B cell (primary cell): ENCODE measurements at regions of chr5 and their contacts with region 1.

Region 1: DNA sequence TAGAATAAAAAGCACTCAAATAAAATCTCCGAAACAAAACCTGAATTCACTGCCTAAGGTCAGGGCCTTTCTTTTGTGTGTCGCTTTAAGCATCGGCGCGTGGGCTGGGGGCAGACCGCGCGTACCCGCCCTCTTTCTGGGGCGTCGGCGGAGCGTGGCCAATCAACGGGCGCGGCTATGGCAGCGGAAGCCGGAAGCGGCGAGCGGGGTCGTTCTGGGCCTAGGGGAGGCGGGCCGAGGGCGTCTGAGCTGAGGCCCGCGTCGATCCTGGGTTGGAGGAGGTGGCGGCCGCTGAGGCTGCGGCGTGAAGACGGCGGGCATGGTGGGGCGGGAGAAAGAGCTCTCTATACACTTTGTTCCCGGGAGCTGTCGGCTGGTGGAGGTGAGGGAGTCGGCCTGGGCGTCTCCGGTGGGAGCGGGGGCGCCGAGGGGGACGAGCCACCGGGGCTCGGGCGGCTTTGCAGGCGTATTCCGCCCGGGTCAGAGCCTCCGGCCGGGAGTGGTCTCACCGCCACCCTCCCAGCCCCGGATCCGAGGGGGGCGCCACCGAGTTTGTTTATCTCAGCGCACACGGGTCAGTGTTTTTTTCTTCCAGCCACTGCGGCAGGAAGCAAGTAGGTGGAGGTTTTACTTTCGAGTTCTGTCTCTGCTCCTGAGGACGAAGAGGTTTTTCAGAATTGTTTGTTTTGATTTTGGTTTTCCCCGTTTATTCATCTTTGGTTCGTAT is at the start of gene MAT2B:
- DNase-seq: peak; percentile 97
- ATAC-seq: peak; percentile 88
- H3K4me3 ChIP-seq: peak within 1 kb of the TSS; percentile 61 to 99 (median 83)
- H3K4me3 Mint-ChIP-seq: peak within 1 kb of the TSS; percentile 98
- H3K27ac ChIP-seq: peak within 1 kb of the TSS; percentile 93 to 95
- H3K27ac Mint-ChIP-seq: peak within 1 kb of the TSS; percentile 98
- H3K4me1 ChIP-seq: peaks cover 47 to 60% of the 10 kb centered on the region in 2 donors
- H3K4me1 Mint-ChIP-seq: peaks cover 61% of the 10 kb centered on the region
- H3K27me3 ChIP-seq: no peaks in the 10 kb centered on the region
- H3K27me3 Mint-ChIP-seq: no peaks in the 10 kb centered on the region
- CTCF ChIP-seq: peak; percentile 76
- total RNA-seq, gene MAT2B: 117 and 123 TPM in 2 replicates

Region 2: GRCh38 chr5:163094492-163095180 is 410.9 kb before region 1 on chr5:
- CTCF ChIA-PET with region 1: no interaction called
- POLR2A ChIA-PET with region 1: no interaction called
- intact Hi-C with region 1: no loop called
- DNase-seq: no peak
- ATAC-seq: no peak
- H3K4me3 ChIP-seq: no peak overlapping the region
- H3K4me3 Mint-ChIP-seq: no peak overlapping the region
- H3K27ac ChIP-seq: no peak overlapping the region
- H3K27ac Mint-ChIP-seq: no peak overlapping the region
- H3K4me1 ChIP-seq: no peaks in the 10 kb centered on the region
- H3K4me1 Mint-ChIP-seq: no peaks in the 10 kb centered on the region
- H3K27me3 ChIP-seq: no peaks in the 10 kb centered on the region
- H3K27me3 Mint-ChIP-seq: no peaks in the 10 kb centered on the region
- CTCF ChIP-seq: no peak

Region 3: GRCh38 chr5:163437309-163438182 is 68.0 kb before region 1 on chr5 and contains the start of gene CCNG1:
- CTCF ChIA-PET with region 1: no interaction called
- POLR2A ChIA-PET with region 1: interaction called, 3 read pairs
- intact Hi-C with region 1: loop called (anchors 1 kb)
- DNase-seq: peak; percentile 94
- ATAC-seq: peak; percentile 97
- H3K4me3 ChIP-seq: peak within 1 kb of the TSS; percentile 55 to 95 (median 83)
- H3K4me3 Mint-ChIP-seq: peak within 1 kb of the TSS; percentile 87
- H3K27ac ChIP-seq: peak within 1 kb of the TSS; percentile 54 to 90
- H3K27ac Mint-ChIP-seq: peak within 1 kb of the TSS; percentile 93
- H3K4me1 ChIP-seq: peaks cover 15 to 23% of the 10 kb centered on the region in 2 donors
- H3K4me1 Mint-ChIP-seq: peaks cover 35% of the 10 kb centered on the region
- H3K27me3 ChIP-seq: no peaks in the 10 kb centered on the region
- H3K27me3 Mint-ChIP-seq: no peaks in the 10 kb centered on the region
- CTCF ChIP-seq: no peak
- total RNA-seq, gene CCNG1: 80.1 and 95.1 TPM in 2 replicates

Region 4: DNA sequence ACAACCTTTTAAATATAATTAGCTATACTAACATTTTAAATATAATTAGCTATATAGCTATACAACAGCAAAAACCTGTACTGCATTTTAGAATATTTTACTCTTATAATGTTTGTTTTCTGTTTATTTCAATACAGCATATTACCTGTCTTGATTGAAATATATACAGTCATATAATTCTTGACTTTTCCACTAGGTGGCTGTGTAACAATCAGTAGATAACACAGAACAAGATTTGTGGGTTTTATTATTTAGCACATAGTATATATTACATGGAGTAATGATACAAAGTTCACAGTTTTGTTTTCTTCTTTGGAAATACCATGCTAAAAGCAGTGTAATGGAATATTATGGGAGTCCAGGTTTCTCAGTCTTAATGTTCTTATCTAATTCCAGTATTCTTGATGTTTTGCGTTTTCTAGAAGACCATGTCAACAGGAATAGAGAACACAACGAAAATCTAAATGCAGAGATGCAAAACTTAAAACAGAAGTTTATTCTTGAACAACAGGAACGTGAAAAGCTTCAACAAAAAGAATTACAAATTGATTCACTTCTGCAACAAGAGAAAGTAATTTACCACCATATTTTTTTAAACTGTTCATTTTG is 31.8 kb before region 1 on chr5:
- CTCF ChIA-PET with region 1: interaction called, 27 read pairs
- POLR2A ChIA-PET with region 1: interaction called, 3 read pairs
- intact Hi-C with region 1: loop called (anchors 1 kb)
- DNase-seq: peak; percentile 47
- ATAC-seq: peak; percentile 78
- H3K4me3 ChIP-seq: no peak overlapping the region
- H3K4me3 Mint-ChIP-seq: no peak overlapping the region
- H3K27ac ChIP-seq: no peak overlapping the region
- H3K27ac Mint-ChIP-seq: no peak overlapping the region
- H3K4me1 ChIP-seq: no peaks in the 10 kb centered on the region
- H3K4me1 Mint-ChIP-seq: no peaks in the 10 kb centered on the region
- H3K27me3 ChIP-seq: no peaks in the 10 kb centered on the region
- H3K27me3 Mint-ChIP-seq: no peaks in the 10 kb centered on the region
- CTCF ChIP-seq: peak; percentile 69

Region 5: GRCh38 chr5:163525096-163525495 is 19.6 kb after region 1 on chr5:
- CTCF ChIA-PET with region 1: no interaction called
- POLR2A ChIA-PET with region 1: no interaction called
- intact Hi-C with region 1: no loop called
- DNase-seq: no peak
- ATAC-seq: no peak
- H3K4me3 ChIP-seq: no peak overlapping the region
- H3K4me3 Mint-ChIP-seq: no peak overlapping the region
- H3K27ac ChIP-seq: no peak overlapping the region
- H3K27ac Mint-ChIP-seq: no peak overlapping the region
- H3K4me1 ChIP-seq: no peaks in the 10 kb centered on the region
- H3K4me1 Mint-ChIP-seq: peaks cover 4% of the 10 kb centered on the region
- H3K27me3 ChIP-seq: no peaks in the 10 kb centered on the region
- H3K27me3 Mint-ChIP-seq: no peaks in the 10 kb centered on the region
- CTCF ChIP-seq: no peak

Region 6: GRCh38 chr5:163727028-163727427 is 221.5 kb after region 1 on chr5:
- CTCF ChIA-PET with region 1: no interaction called
- POLR2A ChIA-PET with region 1: no interaction called
- intact Hi-C with region 1: loop called (anchors 1 kb)
- DNase-seq: peak; percentile 68
- ATAC-seq: peak; percentile 97
- H3K4me3 ChIP-seq: peak overlapping the region in 4 of 5 experiments; percentile 12 to 58 (median 40)
- H3K4me3 Mint-ChIP-seq: peak overlapping the region; percentile 49
- H3K27ac ChIP-seq: peak overlapping the region; percentile 37 to 48
- H3K27ac Mint-ChIP-seq: peak overlapping the region; percentile 80
- H3K4me1 ChIP-seq: peaks cover 8 to 16% of the 10 kb centered on the region in 2 donors
- H3K4me1 Mint-ChIP-seq: peaks cover 34% of the 10 kb centered on the region
- H3K27me3 ChIP-seq: no peaks in the 10 kb centered on the region
- H3K27me3 Mint-ChIP-seq: no peaks in the 10 kb centered on the region
- CTCF ChIP-seq: no peak

Region 7: DNA sequence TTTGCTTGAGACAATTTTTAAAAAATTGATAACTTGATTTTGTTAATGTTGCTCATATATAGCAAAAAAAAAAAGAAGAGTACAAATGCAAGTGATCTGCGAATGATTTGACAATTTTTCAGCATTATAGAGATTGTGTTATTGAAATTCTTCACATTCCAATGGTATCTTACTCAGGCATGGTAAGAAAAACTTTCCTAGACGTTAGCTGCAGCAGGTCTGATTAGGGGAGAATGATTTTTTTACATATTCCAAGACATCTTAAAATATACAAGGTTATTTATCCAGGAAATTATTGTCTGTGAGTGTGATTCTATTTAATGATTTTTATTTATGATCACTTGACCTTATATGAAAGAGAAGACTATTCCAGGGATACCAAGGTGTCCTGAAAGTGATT is 361.8 kb after region 1 on chr5:
- CTCF ChIA-PET with region 1: no interaction called
- POLR2A ChIA-PET with region 1: no interaction called
- intact Hi-C with region 1: no loop called
- DNase-seq: no peak
- ATAC-seq: no peak
- H3K4me3 ChIP-seq: no peak overlapping the region
- H3K4me3 Mint-ChIP-seq: no peak overlapping the region
- H3K27ac ChIP-seq: no peak overlapping the region
- H3K27ac Mint-ChIP-seq: no peak overlapping the region
- H3K4me1 ChIP-seq: no peaks in the 10 kb centered on the region
- H3K4me1 Mint-ChIP-seq: peaks cover 3% of the 10 kb centered on the region
- H3K27me3 ChIP-seq: no peaks in the 10 kb centered on the region
- H3K27me3 Mint-ChIP-seq: peaks cover 14% of the 10 kb centered on the region
- CTCF ChIP-seq: no peak